ENCODE measurements at regions of chr11 and their contacts with region 1.

Region 1: GRCh38 chr11:118895142-118896039 is 11.7 kb downstream of the CXCR5 start:
- DNase-seq: peak; percentile 63 to 88 (median 80)
- ATAC-seq: peak; percentile 72 to 85
- H3K4me3 Mint-ChIP-seq: peak overlapping the region; percentile 61 to 91 (median 78)
- H3K27ac Mint-ChIP-seq: peak overlapping the region; percentile 92 to 99 (median 98)
- H3K4me1 Mint-ChIP-seq: peaks cover 44 to 88% (median 84%) of the 10 kb centered on the region in 4 donors
- H3K27me3 Mint-ChIP-seq: no peaks in the 10 kb centered on the region

Region 2: GRCh38 chr11:118689851-118690552 is 205.4 kb before region 1 on chr11:
- POLR2A ChIA-PET with region 1: interaction called, 20 read pairs
- DNase-seq: peak; percentile 71 to 91 (median 81)
- ATAC-seq: peak; percentile 87 to 94
- H3K4me3 Mint-ChIP-seq: peak overlapping the region; percentile 50 to 82 (median 76)
- H3K27ac Mint-ChIP-seq: peak overlapping the region; percentile 22 to 97 (median 77)
- H3K4me1 Mint-ChIP-seq: peaks cover 29 to 70% (median 51%) of the 10 kb centered on the region in 4 donors
- H3K27me3 Mint-ChIP-seq: no peaks in the 10 kb centered on the region

Region 3: GRCh38 chr11:118744046-118744445 is 151.3 kb before region 1 on chr11:
- POLR2A ChIA-PET with region 1: no interaction called
- DNase-seq: no peak
- ATAC-seq: no peak
- H3K4me3 Mint-ChIP-seq: no peak overlapping the region
- H3K27ac Mint-ChIP-seq: peak overlapping the region in 5 of 10 donors; percentile 0 to 74 (median 12)
- H3K4me1 Mint-ChIP-seq: peaks cover 6 to 27% (median 9%) of the 10 kb centered on the region in 4 donors
- H3K27me3 Mint-ChIP-seq: no peaks in the 10 kb centered on the region

Region 4: DNA sequence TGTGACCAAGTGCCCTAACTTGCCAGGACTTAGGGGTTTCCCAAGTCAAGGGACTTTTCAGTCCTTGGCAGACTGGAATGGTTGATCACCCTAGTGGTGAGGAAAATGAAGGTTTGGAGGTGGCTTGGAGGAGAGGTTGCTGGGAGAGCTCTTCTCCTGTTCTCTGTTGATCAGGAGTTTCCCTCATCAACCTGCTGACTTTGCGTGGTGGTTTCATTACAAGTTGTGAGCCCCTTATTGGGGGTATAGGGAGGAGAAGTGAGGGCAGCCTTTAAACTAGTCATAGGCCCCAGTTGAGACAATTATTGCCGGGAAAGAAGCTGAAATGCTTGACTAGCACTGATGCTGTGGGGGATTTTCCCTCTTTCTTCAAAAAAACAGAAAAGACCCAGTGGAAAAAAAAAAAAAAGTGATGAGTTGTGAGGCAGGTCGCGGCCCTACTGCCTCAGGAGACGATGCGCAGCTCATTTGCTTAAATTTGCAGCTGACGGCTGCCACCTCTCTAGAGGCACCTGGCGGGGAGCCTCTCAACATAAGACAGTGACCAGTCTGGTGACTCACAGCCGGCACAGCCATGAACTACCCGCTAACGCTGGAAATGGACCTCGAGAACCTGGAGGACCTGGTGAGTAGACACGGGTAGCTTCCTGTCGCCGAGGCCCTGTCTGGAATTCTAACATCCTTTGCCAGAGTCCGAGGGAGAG is 11.9 kb before region 1 on chr11 and contains the start of gene CXCR5:
- POLR2A ChIA-PET with region 1: interaction called, 16 read pairs
- DNase-seq: peak in 2 of 10 donors; percentile 38 to 60
- ATAC-seq: peak; percentile 40 to 62
- H3K4me3 Mint-ChIP-seq: peak within 1 kb of the TSS in 4 of 10 donors; percentile 22 to 88 (median 44)
- H3K27ac Mint-ChIP-seq: peak within 1 kb of the TSS; percentile 22 to 84 (median 72)
- H3K4me1 Mint-ChIP-seq: peaks cover 37 to 81% (median 79%) of the 10 kb centered on the region in 4 donors
- H3K27me3 Mint-ChIP-seq: no peaks in the 10 kb centered on the region
- polyA plus RNA-seq, gene CXCR5: 0.17 to 0.63 (median 0.29) TPM

Region 5: GRCh38 chr11:118918128-118918685 is 22.8 kb after region 1 on chr11:
- POLR2A ChIA-PET with region 1: no interaction called
- DNase-seq: peak in 9 of 10 donors; percentile 23 to 81 (median 67)
- ATAC-seq: peak; percentile 4 to 15
- H3K4me3 Mint-ChIP-seq: peak overlapping the region; percentile 83 to 99 (median 96)
- H3K27ac Mint-ChIP-seq: peak overlapping the region; percentile 96 to 100 (median 100)
- H3K4me1 Mint-ChIP-seq: peaks cover 45 to 83% (median 75%) of the 10 kb centered on the region in 4 donors
- H3K27me3 Mint-ChIP-seq: no peaks in the 10 kb centered on the region

Region 6: DNA sequence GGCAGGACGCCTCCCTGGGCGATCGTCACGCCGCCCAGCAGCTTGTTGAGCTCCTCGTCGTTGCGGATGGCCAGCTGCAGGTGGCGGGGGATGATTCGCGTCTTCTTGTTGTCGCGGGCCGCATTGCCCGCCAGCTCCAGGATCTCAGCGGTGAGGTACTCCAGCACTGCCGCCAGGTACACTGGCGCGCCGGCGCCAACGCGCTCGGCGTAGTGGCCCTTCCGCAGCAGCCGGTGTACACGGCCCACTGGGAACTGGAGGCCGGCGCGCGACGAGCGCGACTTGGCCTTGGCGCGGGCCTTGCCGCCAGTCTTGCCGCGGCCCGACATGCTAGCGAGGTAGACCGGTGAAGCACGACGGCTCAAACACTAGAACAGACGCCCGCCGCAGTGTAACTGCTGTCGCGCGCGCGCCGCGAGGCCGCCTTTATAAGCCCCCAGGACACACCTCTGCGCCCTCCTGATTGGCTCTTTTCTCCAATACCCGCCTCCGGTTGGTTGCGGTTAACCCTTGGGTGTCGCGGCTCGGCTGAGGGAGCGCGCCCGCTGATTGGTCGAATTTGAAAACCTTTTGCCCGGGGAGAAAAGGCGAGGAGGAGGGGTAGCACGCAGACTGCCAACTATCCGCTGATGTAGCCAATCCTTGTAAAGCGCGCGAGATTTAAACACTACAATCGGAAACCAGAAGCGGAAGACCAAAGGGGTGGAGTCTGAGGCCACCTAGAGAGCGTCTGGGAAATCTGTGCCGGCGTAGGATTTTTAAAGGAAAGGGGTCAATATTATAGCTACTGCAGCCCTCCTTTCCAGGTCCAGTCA is 199.9 kb after region 1 on chr11:
- POLR2A ChIA-PET with region 1: no interaction called
- DNase-seq: peak; percentile 96 to 100 (median 100)
- ATAC-seq: peak; percentile 88 to 91
- H3K4me3 Mint-ChIP-seq: peak overlapping the region; percentile 89 to 95 (median 92)
- H3K27ac Mint-ChIP-seq: peak overlapping the region; percentile 79 to 98 (median 93)
- H3K4me1 Mint-ChIP-seq: peaks cover 24 to 42% (median 37%) of the 10 kb centered on the region in 4 donors
- H3K27me3 Mint-ChIP-seq: peaks cover 0 to 3% (median 0%) of the 10 kb centered on the region in 5 donors